ENCODE measurements at regions of chr12 and their contacts with region 1.

Region 1: DNA sequence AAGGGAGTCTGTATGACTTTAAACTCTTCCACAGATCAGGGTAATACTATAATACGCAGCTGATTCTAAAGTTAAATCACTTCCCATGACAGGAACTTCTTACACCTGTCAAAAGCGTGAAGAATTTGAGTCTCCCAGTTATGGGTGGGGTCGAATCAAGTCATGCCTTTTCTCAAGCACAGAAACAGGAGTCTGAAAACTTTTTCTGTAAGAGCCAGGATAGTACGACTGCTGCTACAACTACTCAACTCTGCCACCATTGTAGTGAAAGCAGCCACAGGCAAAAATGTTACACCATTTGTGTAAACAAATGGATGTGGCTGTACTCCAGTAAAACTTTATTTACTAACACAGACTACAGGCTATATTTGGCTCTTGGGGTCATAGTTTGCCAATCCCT is 90.3 kb downstream of the DUSP6 start:
- DNase-seq: no peak
- H3K4me3 Mint-ChIP-seq: no peak overlapping the region
- H3K27ac Mint-ChIP-seq: no peak overlapping the region
- H3K4me1 Mint-ChIP-seq: peaks cover 25% of the 10 kb centered on the region
- H3K27me3 Mint-ChIP-seq: no peaks in the 10 kb centered on the region

Region 2: DNA sequence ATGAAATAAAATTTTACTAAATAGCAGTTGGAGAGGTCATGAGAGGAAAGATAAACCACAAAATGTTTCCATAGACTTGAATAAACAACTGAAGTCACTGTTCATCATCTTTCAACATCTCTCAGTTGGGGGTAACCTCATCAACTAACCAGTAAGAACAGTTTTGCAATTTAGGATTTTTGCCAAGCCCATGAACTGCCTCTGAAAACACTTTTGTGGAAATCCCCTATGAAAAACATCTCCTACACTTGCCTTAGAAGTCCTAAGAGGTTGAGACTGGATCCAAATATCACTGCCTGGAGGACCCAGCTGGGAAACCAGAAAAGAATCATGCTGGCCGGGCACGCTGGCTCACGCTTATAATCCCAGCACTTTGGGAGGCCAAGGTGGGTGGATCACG is 1505.9 kb before region 1 on chr12:
- intact Hi-C with region 1: no loop called
- DNase-seq: no peak
- H3K4me3 Mint-ChIP-seq: no peak overlapping the region
- H3K27ac Mint-ChIP-seq: no peak overlapping the region
- H3K4me1 Mint-ChIP-seq: no peaks in the 10 kb centered on the region
- H3K27me3 Mint-ChIP-seq: no peaks in the 10 kb centered on the region

Region 3: DNA sequence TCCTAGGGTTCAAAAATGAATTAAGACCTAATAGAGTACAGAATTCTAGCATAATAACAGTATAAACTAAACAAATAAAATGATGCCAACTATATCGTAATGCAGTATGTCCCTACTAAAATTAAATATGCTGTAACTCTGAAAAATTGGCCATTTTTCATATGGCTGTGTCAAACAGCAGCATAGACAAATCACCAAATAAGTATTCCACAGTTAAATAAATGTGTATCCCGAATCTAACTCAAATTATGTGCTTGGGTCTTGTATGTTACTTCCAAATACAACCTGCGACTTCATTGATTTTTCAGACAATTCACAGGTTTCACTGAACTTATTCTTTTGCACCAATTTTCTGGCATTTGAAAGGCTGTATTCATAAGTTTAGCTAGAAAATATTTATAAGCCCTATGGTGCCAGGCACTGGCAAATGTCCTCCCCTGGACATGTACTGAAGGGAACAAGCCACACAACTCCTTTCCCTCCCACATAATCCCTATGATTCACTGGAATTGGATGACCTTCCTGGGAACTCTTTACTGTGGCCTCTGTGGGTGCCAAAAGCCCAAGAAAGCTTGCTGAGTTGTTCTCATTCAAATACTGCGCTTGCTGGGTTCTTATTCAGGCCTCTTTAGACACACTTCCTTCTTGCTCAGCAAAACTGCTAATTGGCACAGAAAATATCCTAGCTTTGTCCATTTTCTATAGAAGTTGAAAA is 790.5 kb before region 1 on chr12:
- intact Hi-C with region 1: no loop called
- DNase-seq: no peak
- H3K4me3 Mint-ChIP-seq: no peak overlapping the region
- H3K27ac Mint-ChIP-seq: no peak overlapping the region
- H3K4me1 Mint-ChIP-seq: no peaks in the 10 kb centered on the region
- H3K27me3 Mint-ChIP-seq: no peaks in the 10 kb centered on the region

Region 4: GRCh38 chr12:88781909-88782308 is 480.1 kb before region 1 on chr12:
- intact Hi-C with region 1: no loop called
- DNase-seq: no peak
- H3K4me3 Mint-ChIP-seq: no peak overlapping the region
- H3K27ac Mint-ChIP-seq: no peak overlapping the region
- H3K4me1 Mint-ChIP-seq: no peaks in the 10 kb centered on the region
- H3K27me3 Mint-ChIP-seq: no peaks in the 10 kb centered on the region

Region 5: DNA sequence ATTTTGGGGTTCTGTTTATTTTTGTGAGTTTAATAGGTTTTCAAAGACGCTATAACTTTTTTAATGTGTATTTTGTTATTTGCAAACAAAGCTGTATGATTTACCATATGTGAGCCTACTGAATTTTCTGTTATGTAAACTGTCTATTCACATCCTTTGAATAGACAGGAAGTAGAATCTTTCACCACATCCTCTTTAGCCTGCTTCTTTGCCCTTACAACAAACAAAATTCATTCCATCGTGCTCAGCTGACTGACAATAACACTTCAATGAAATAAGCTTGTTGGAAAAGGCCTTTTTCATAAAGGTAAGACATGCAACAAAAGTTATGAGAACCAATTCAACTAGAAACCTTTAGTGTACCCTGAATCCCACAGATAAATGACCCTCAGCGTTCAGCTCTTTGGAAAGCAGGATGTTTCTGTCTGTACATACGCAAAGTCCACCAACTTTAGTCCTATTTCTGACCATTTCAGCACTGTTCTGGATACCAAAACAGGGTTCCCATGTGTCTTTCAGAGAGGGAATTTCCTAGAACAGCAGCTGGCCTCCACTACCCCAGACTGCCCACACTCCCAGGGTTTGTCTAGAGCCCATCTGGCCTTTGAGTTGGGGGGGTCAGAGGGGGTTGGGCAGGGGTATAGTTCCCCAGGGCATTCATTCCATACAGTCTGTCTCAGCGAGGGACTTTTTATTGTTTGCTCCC is 19.0 kb after region 1 on chr12:
- intact Hi-C with region 1: loop called (anchors 2 kb)
- DNase-seq: peak; percentile 76
- H3K4me3 Mint-ChIP-seq: peak overlapping the region; percentile 71
- H3K27ac Mint-ChIP-seq: peak overlapping the region; percentile 89
- H3K4me1 Mint-ChIP-seq: peaks cover 28% of the 10 kb centered on the region
- H3K27me3 Mint-ChIP-seq: no peaks in the 10 kb centered on the region

Measured in activated CD4-positive, alpha-beta T cell treated with anti-CD3 and anti-CD28 coated beads, Interleukin-2, amount 10 ng/mL, durations not matched to agents 24 days and 14 days (primary cell).